Common myeloid progenitor, CD34-positive (primary cell): ENCODE measurements at regions of chr5 and their contacts with region 1.

Region 1: DNA sequence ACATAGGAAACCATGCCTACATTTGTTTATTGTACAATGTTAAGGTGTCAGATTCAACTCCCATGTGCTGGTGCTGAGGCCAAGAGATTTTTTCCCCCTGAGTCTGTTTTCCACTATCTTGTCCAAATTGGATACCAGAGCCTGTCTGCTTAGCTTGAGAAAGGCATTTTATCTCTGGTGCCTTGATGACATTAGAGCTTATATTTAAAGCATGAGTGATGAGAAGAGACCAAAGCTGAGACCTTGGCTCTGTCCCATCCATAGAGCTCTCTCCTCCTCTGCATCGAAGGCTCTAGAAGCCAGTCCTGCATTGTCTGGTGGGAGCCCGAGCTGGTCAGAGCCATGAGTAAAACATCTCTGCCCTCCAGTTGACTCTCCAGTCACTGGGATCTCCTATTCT is 10.4 kb upstream of the PPP2CA start:
- DNase-seq: no peak
- H3K4me3 ChIP-seq: no peak overlapping the region
- H3K27ac ChIP-seq: no peak overlapping the region
- H3K4me1 ChIP-seq: peaks cover 0 to 9% (median 0%) of the 10 kb centered on the region in 4 experiments
- H3K27me3 ChIP-seq: no peaks in the 10 kb centered on the region

Region 2: DNA sequence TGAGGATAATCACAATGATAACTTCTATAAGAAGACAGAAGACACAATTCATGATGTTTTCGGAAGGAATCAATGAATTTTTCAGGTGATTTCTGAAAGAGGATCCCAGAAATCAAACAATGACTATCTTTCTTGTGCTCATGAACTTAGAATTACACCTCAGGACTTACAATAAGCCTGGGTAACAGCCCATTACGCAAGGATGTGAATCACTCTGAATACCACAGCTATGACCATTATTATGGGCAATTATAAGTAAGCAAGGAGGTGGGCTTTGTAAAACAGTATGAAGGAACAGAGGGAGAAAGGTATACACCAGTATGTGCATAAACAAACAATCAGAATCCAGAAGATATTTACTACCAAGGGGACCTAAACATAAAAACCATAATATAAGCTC is 11.1 kb after region 1 on chr5:
- CTCF ChIA-PET with region 1: interaction called, 10 read pairs
- POLR2A ChIA-PET with region 1: no interaction called
- DNase-seq: no peak
- H3K4me3 ChIP-seq: no peak overlapping the region
- H3K27ac ChIP-seq: no peak overlapping the region
- H3K4me1 ChIP-seq: peaks cover 0 to 6% (median 0%) of the 10 kb centered on the region in 4 experiments
- H3K27me3 ChIP-seq: peaks cover 0 to 3% (median 0%) of the 10 kb centered on the region in 5 experiments